Right lobe of liver (tissue), 6 donors: ENCODE measurements at regions of chr17 and their contacts with region 1.

Region 1: DNA sequence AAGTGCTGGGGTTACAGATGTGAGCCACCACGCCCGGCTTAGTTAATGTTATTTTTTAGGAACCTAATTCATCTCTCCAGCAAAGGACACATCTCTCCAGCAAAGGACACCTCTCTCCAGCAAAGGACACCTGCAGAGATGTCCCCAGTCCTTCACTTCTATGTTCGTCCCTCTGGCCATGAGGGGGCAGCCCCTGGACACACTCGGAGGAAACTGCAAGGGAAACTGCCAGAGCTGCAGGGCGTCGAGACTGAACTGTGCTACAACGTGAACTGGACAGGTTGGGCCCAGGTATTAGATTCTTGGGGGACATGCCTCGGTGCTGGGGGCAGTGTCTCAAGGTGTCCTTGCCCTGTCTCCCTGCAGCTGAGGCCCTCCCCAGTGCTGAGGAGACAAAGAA is 4.7 kb downstream of the PFAS start:
- DNase-seq: peak in 2 of 3 donors; percentile 69 to 70
- ATAC-seq: peak; percentile 48 to 79 (median 60)
- H3K4me3 ChIP-seq: no peak overlapping the region
- H3K27ac ChIP-seq: no peak overlapping the region
- H3K4me1 ChIP-seq: peaks cover 0 to 6% (median 0%) of the 10 kb centered on the region in 4 donors
- H3K27me3 ChIP-seq: no peaks in the 10 kb centered on the region
- CTCF ChIP-seq: peak in 3 of 4 donors; percentile 33 to 61 (median 49)
- POLR2A ChIP-seq: no peak

Region 2: DNA sequence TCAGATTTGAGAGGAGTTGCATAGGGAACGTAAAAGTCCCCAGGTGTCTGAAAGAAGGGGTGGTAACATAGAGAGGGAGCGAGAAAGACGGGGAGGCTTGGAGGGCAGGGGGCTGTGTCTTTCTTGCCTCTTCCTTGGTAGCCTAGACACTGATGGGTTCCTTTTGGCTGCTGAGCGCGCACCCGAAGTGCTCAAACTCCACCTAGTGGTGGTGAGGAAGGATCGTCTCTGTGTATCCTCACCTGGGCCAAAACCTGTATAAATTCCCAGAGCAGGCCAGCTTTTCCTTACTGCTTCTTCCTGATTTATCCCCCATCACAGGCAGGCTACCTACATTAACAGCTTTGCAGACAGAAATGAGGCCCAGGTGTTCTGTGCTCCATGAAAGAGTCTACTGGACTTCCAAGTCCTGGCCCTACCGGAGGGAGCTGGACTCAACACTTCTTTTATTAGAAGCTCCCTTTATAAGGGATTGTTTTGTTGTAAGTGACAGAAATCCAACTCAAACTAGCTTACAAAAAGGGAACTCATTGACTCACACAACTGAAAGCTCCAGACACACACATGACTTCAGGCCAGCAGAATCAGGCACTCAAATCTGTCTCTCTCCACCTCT is 46.9 kb after region 1 on chr17:
- intact Hi-C with region 1: loop called in 1 of 2 experiments (anchors 5 kb)
- DNase-seq: peak; percentile 56 to 71 (median 67)
- ATAC-seq: peak; percentile 96 to 99 (median 98)
- H3K4me3 ChIP-seq: no peak overlapping the region
- H3K27ac ChIP-seq: no peak overlapping the region
- H3K4me1 ChIP-seq: no peaks in the 10 kb centered on the region
- H3K27me3 ChIP-seq: no peaks in the 10 kb centered on the region
- CTCF ChIP-seq: peak; percentile 80 to 87 (median 82)
- POLR2A ChIP-seq: no peak

Region 3: GRCh38 chr17:8366231-8366630 is 112.4 kb after region 1 on chr17:
- intact Hi-C with region 1: no loop called
- DNase-seq: no peak
- ATAC-seq: peak in 2 of 4 donors; percentile 23 to 52
- H3K4me3 ChIP-seq: no peak overlapping the region
- H3K27ac ChIP-seq: no peak overlapping the region
- H3K4me1 ChIP-seq: no peaks in the 10 kb centered on the region
- H3K27me3 ChIP-seq: no peaks in the 10 kb centered on the region
- CTCF ChIP-seq: no peak
- POLR2A ChIP-seq: no peak